MCF 10A (cell line): ENCODE measurements at regions of chr2 and their contacts with region 1.

Region 1: DNA sequence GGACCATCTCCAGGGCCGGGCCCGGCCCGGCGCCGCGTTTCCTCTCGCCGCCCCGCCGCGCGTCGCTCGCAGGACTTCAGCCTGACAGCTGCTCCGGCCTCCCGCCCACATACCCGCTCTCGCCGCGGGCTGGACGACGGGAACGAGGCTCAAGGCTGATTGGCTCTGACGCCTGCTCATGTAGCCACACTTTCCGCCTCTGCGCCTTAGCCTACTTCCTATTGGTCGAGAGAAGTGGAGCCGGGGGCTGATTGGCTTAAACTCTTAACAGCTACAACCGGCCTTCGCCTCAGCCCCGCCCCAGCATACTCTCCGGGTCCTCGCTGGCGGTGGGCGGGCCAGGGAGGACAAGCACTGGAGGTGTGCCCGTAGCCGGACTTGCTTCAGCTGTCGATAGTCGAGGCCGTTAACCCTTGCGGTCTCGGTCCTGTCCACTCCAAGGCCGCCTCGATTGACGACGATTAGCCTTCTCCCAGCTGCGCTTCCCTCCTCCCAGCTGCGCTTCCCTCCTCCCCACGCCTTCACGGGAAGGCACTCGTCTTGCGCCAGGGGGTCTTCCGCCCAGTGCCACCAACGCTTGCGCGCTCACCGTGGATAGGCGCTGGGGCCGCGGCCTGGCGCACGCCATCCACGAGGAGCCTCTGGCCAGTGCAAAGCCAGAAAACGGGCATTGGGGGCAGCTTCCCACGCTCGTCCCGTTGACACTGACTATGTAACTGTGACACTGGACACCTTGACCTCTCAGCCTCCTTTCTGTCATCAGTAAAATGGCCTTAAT is at the start of gene PRADC1:
- DNase-seq: peak; percentile 100
- H3K4me3 Mint-ChIP-seq: peak within 1 kb of the TSS; percentile 75
- H3K27ac Mint-ChIP-seq: peak within 1 kb of the TSS; percentile 98
- H3K4me1 Mint-ChIP-seq: peaks cover 23% of the 10 kb centered on the region
- H3K27me3 Mint-ChIP-seq: no peaks in the 10 kb centered on the region
- CTCF ChIP-seq: no peak
- total RNA-seq, gene PRADC1: 9.5 and 13.5 TPM in 2 replicates

Region 2: GRCh38 chr2:73112913-73113633 is 120.3 kb before region 1 on chr2 and contains the start of gene RAB11FIP5:
- CTCF ChIA-PET with region 1: no interaction called
- POLR2A ChIA-PET with region 1: interaction called, 12 read pairs
- intact Hi-C with region 1: no loop called
- DNase-seq: peak; percentile 75
- H3K4me3 Mint-ChIP-seq: peak within 1 kb of the TSS; percentile 96
- H3K27ac Mint-ChIP-seq: peak within 1 kb of the TSS; percentile 89
- H3K4me1 Mint-ChIP-seq: peaks cover 20% of the 10 kb centered on the region
- H3K27me3 Mint-ChIP-seq: no peaks in the 10 kb centered on the region
- CTCF ChIP-seq: no peak
- total RNA-seq, gene RAB11FIP5: 35.6 and 36.9 TPM in 2 replicates

Region 3: DNA sequence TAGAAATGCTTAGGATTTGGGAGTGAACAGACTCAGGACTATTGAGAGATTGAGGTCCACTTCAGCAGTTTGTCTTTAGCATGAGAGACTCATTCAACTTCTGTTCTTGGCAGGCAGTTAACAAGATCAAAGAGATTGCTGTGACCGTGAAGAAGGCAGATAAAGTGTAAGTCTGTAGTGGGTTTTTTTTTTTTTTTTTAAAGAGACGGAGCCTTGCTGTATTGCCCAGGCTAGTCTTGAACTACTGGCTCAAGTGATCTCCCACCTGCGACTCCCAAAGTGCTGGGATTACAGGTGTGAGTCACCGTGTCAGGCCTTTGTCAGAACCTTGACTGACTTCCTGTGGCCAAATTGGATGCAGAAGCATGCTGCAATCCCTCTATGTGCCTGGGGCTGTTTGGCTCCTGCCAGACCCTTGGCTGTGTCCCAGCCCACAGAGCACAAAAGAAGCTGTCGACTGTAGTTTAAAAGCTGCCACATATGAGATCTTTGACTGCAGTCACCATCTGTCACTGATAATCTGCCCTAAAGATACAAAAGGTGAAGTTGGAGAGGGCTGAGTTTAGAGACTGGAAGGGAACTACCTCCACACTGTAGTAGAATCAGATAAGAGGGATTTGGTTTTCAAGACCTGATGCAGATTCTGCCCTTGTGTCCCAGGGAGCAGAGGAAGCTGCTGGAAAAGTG is 10.7 kb after region 1 on chr2:
- CTCF ChIA-PET with region 1: interaction called, 3 read pairs
- POLR2A ChIA-PET with region 1: interaction called, 41 read pairs
- intact Hi-C with region 1: no loop called
- DNase-seq: peak; percentile 97
- H3K4me3 Mint-ChIP-seq: peak overlapping the region; percentile 9
- H3K27ac Mint-ChIP-seq: peak overlapping the region; percentile 61
- H3K4me1 Mint-ChIP-seq: peaks cover 24% of the 10 kb centered on the region
- H3K27me3 Mint-ChIP-seq: no peaks in the 10 kb centered on the region
- CTCF ChIP-seq: no peak

Region 4: GRCh38 chr2:73253901-73254300 is 20.6 kb after region 1 on chr2:
- CTCF ChIA-PET with region 1: interaction called, 4 read pairs
- POLR2A ChIA-PET with region 1: interaction called, 11 read pairs
- intact Hi-C with region 1: no loop called
- DNase-seq: no peak
- H3K4me3 Mint-ChIP-seq: no peak overlapping the region
- H3K27ac Mint-ChIP-seq: no peak overlapping the region
- H3K4me1 Mint-ChIP-seq: no peaks in the 10 kb centered on the region
- H3K27me3 Mint-ChIP-seq: no peaks in the 10 kb centered on the region
- CTCF ChIP-seq: no peak

Region 5: DNA sequence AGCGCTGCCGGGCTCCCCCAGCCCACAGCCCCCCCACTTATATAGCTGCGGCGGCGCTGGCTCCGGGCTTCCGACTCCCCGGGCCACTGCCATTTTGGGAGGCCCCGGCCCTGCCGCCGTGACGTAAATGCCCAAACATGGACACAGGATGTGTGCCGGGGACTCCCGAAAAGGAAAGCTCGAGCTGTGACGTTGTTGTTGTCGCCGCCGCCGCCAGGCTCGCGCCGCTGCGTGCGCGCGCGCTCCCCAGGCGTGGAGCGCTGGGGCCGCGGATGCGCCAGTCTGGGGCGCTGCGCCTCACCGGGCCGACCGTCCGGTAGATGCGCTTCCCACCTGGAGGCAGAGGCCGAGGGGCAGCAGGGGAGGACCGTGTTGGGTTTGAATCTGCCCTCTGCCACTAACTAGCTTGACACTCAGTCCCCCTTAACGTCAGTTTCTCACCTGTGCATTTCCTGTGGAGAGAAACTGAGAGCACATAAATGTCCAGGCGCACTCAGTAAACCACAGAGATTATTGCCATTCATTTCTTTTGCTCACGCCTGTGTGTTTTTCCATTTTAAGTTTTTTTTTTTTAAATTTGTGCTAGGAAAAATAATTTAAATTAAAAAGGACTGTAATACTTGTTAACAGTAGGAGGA is 60.3 kb after region 1 on chr2 and contains the start of gene EGR4:
- CTCF ChIA-PET with region 1: interaction called, 20 read pairs
- POLR2A ChIA-PET with region 1: interaction called, 5 read pairs
- intact Hi-C with region 1: no loop called
- DNase-seq: peak; percentile 75
- H3K4me3 Mint-ChIP-seq: peak within 1 kb of the TSS; percentile 70
- H3K27ac Mint-ChIP-seq: peak within 1 kb of the TSS; percentile 31
- H3K4me1 Mint-ChIP-seq: peaks cover 22% of the 10 kb centered on the region
- H3K27me3 Mint-ChIP-seq: peaks cover 20% of the 10 kb centered on the region
- CTCF ChIP-seq: no peak
- total RNA-seq, gene EGR4: 0.22 and 0.37 TPM in 2 replicates